ENCODE measurements at regions of chr3 and their contacts with region 1.

Region 1: DNA sequence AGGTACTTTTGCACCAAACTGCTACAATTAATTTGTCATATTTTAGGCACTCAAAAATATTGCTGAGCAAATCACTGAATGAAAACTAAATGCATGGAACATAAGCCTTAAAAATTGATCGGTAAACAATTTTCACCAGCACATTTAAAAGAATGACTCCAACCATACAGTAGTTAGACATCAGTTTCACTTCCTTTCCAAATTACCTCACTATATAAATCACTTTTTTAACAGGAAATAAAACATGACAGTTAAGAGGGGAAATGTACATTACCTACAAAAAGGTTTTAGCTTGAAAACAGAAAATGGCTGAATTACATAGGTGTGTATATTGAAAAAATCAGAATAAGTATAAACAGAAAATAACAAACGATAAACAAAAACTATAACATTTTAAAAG is 108.4 kb downstream of the SERPINI1 start:
- DNase-seq: no peak
- ATAC-seq: no peak
- H3K4me3 ChIP-seq: no peak overlapping the region
- H3K4me3 Mint-ChIP-seq: no peak overlapping the region
- H3K27ac ChIP-seq: no peak overlapping the region
- H3K27ac Mint-ChIP-seq: no peak overlapping the region
- H3K4me1 ChIP-seq: no peaks in the 10 kb centered on the region
- H3K4me1 Mint-ChIP-seq: no peaks in the 10 kb centered on the region
- H3K27me3 ChIP-seq: peaks cover 0 to 3% of the 10 kb centered on the region in 2 experiments
- H3K27me3 Mint-ChIP-seq: peaks cover 0 to 2% of the 10 kb centered on the region in 2 donors

Region 2: GRCh38 chr3:167872032-167872431 is 28.1 kb after region 1 on chr3:
- CTCF ChIA-PET with region 1: no interaction called
- POLR2A ChIA-PET with region 1: interaction called in 1 of 2 experiments, 16 read pairs
- DNase-seq: no peak
- ATAC-seq: no peak
- H3K4me3 ChIP-seq: no peak overlapping the region
- H3K4me3 Mint-ChIP-seq: no peak overlapping the region
- H3K27ac ChIP-seq: no peak overlapping the region
- H3K27ac Mint-ChIP-seq: no peak overlapping the region
- H3K4me1 ChIP-seq: no peaks in the 10 kb centered on the region
- H3K4me1 Mint-ChIP-seq: no peaks in the 10 kb centered on the region
- H3K27me3 ChIP-seq: no peaks in the 10 kb centered on the region
- H3K27me3 Mint-ChIP-seq: peaks cover 7 to 8% of the 10 kb centered on the region in 2 donors

Region 3: DNA sequence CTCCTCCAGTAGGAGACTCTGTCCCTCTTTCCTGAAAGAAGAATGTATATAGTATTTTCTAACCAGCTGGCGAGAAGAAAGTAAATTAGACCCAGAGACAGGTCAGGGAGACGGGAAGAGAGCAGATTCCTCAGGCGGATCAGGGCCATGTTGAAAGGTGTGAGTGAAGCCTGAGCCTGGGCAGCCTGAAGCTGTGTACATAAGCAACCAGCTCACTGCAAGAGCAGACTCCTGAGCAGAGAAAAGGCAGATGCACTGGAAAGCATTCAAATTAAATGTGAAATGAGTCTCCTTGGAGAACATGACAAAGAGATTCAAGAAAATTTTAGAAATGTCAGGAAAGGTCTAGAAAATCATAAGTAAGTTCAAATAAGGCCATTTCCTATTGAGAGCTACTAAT is 86.1 kb after region 1 on chr3:
- CTCF ChIA-PET with region 1: no interaction called
- POLR2A ChIA-PET with region 1: no interaction called
- DNase-seq: no peak
- ATAC-seq: no peak
- H3K4me3 ChIP-seq: no peak overlapping the region
- H3K4me3 Mint-ChIP-seq: no peak overlapping the region
- H3K27ac ChIP-seq: no peak overlapping the region
- H3K27ac Mint-ChIP-seq: no peak overlapping the region
- H3K4me1 ChIP-seq: no peaks in the 10 kb centered on the region
- H3K4me1 Mint-ChIP-seq: no peaks in the 10 kb centered on the region
- H3K27me3 ChIP-seq: no peaks in the 10 kb centered on the region
- H3K27me3 Mint-ChIP-seq: peaks cover 0 to 6% of the 10 kb centered on the region in 2 donors

Measured in T-cell (primary cell).